GM12878 (cell line): ENCODE measurements at regions of chr12 and their contacts with region 1.

Region 1: DNA sequence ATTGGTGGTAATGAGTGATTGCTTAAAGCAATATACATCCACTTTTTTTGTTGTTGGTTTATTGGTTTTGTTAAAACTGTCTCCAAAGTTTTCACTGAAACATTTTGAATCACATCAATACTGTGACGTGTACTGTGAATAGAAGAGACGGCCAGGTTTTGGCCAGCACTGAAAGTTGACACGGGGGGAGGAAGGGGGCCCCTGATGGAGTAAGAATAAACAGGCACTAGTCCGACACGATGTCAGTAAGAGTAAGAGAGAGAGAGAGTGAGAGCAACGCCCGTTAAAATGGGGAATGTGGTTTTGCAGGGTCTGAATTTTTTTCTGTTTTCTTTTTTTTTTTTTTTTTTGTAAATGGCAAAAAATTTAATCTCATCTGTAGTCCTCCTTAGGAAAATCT is 14.7 kb downstream of the PEBP1 start:
- DNase-seq: no peak
- ATAC-seq: no peak
- H3K4me3 ChIP-seq: no peak overlapping the region
- H3K27ac ChIP-seq: no peak overlapping the region
- H3K4me1 ChIP-seq: peaks cover 4% of the 10 kb centered on the region
- H3K27me3 ChIP-seq: no peaks in the 10 kb centered on the region
- CTCF ChIP-seq: no peak
- EP300 ChIP-seq: no peak
- POLR2A ChIP-seq: no peak
- RAD21 ChIP-seq: no peak

Region 2: DNA sequence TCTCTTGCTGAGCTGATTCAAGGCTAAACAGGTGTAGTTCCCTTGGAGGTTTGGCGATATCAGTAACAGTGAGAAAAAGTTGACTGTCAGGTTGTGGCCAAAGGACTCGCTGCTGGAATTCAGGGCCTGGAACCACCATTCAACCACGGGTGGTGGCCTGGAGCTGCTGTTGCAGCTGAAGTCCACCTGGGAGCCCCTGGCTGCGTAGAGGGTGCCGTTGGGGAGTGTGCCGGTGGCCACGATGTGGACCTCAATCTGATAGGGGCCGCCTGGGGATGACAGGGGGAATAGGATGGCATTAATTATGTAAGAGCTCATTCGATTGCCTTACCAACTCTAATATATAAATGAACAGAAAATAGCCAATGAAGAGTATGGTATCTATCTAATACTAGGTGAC is 68.5 kb before region 1 on chr12:
- CTCF ChIA-PET with region 1: no interaction called
- POLR2A ChIA-PET with region 1: no interaction called
- RAD21 ChIA-PET with region 1: no interaction called
- SMC1A ChIA-PET with region 1: no interaction called
- in situ Hi-C with region 1: no loop called
- intact Hi-C with region 1: no loop called
- DNase-seq: no peak
- ATAC-seq: no peak
- H3K4me3 ChIP-seq: no peak overlapping the region
- H3K27ac ChIP-seq: no peak overlapping the region
- H3K4me1 ChIP-seq: no peaks in the 10 kb centered on the region
- H3K27me3 ChIP-seq: no peaks in the 10 kb centered on the region
- CTCF ChIP-seq: no peak
- EP300 ChIP-seq: no peak
- POLR2A ChIP-seq: no peak
- RAD21 ChIP-seq: no peak

Region 3: GRCh38 chr12:118126119-118126757 is 24.4 kb before region 1 on chr12:
- CTCF ChIA-PET with region 1: interaction called, 8 read pairs
- POLR2A ChIA-PET with region 1: interaction called, 10 read pairs
- RAD21 ChIA-PET with region 1: interaction called, 3 read pairs
- SMC1A ChIA-PET with region 1: interaction called, 4 read pairs
- in situ Hi-C with region 1: no loop called
- intact Hi-C with region 1: no loop called
- DNase-seq: no peak
- ATAC-seq: no peak
- H3K4me3 ChIP-seq: no peak overlapping the region
- H3K27ac ChIP-seq: no peak overlapping the region
- H3K4me1 ChIP-seq: no peaks in the 10 kb centered on the region
- H3K27me3 ChIP-seq: no peaks in the 10 kb centered on the region
- CTCF ChIP-seq: no peak
- EP300 ChIP-seq: no peak
- POLR2A ChIP-seq: no peak
- RAD21 ChIP-seq: no peak

Region 4: DNA sequence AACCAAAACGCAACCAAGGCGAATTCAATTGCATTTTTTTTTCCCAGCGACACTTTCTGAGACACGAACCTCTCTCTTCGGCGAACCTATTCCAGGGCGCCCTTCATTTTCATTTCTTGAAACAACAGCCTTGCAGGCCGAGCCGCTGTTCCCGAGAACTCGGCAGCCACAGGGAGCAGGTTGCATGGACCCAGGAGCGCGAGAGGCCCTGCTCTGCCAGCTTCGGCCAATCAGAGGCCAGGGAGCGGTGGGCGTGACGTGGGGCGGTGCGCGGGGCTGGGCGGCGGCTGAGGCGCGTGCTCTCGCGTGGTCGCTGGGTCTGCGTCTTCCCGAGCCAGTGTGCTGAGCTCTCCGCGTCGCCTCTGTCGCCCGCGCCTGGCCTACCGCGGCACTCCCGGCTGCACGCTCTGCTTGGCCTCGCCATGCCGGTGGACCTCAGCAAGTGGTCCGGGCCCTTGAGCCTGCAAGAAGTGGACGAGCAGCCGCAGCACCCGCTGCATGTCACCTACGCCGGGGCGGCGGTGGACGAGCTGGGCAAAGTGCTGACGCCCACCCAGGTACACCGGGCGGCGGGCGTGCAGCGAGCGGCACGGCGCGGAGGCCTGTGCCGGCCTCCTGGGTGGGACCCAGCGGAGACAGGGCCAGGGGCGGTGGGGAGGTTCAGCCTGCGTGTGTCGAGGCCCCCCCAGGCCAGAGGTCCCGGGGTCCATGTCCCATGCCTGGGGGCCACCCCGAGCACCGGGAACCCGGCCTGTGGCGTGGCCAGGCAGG is 14.7 kb before region 1 on chr12 and contains the start of gene PEBP1:
- CTCF ChIA-PET with region 1: no interaction called
- POLR2A ChIA-PET with region 1: interaction called, 3 read pairs
- RAD21 ChIA-PET with region 1: interaction called, 3 read pairs
- SMC1A ChIA-PET with region 1: interaction called, 10 read pairs
- in situ Hi-C with region 1: no loop called
- intact Hi-C with region 1: no loop called
- DNase-seq: peak; percentile 77
- ATAC-seq: peak; percentile 98
- H3K4me3 ChIP-seq: peak within 1 kb of the TSS; percentile 86
- H3K27ac ChIP-seq: peak within 1 kb of the TSS; percentile 86
- H3K4me1 ChIP-seq: peaks cover 11% of the 10 kb centered on the region
- H3K27me3 ChIP-seq: no peaks in the 10 kb centered on the region
- CTCF ChIP-seq: no peak
- EP300 ChIP-seq: no peak
- POLR2A ChIP-seq: peak; percentile 97
- RAD21 ChIP-seq: no peak
- polyA plus RNA-seq, gene PEBP1: 79.4 to 150 TPM